Breast epithelium (tissue), 4 donors: ENCODE measurements at regions of chr3 and their contacts with region 1.

Region 1: GRCh38 chr3:112799946-112800345 is 46.7 kb downstream of the CD200R1L start:
- DNase-seq: no peak
- H3K4me3 ChIP-seq: no peak overlapping the region
- H3K27ac ChIP-seq: no peak overlapping the region
- H3K4me1 ChIP-seq: no peaks in the 10 kb centered on the region
- H3K27me3 ChIP-seq: no peaks in the 10 kb centered on the region
- CTCF ChIP-seq: no peak
- POLR2A ChIP-seq: no peak

Region 2: DNA sequence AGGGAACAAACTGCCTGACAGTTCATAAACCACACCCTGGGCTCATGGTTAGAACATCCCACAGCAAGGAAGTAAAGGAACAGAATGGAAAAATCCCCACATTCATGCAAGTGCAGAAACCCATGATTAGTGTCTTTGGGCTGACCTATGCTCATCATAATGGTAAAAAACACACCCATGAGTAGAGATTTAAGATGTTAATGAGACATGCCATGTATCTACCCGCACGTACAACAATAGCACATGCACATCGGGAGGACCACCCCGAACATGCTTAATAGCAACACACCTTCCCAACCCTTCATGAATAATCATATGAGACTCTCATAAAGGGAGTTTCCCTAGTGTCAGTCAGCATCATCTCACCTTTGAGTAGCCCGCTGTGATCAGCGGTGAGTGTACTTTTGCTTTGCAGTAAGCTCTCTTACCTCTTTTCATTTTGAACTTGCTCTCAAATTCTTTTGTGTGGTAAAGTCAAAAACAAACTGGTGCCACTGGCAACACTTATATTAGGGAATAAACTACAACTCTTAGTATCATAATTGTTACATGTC is 1228.0 kb before region 1 on chr3:
- intact Hi-C with region 1: loop called (anchors 5 kb)
- DNase-seq: no peak
- H3K4me3 ChIP-seq: no peak overlapping the region
- H3K27ac ChIP-seq: no peak overlapping the region
- H3K4me1 ChIP-seq: no peaks in the 10 kb centered on the region
- H3K27me3 ChIP-seq: no peaks in the 10 kb centered on the region
- CTCF ChIP-seq: no peak
- POLR2A ChIP-seq: no peak

Region 3: GRCh38 chr3:112734718-112735350 is 65.1 kb before region 1 on chr3:
- intact Hi-C with region 1: no loop called
- DNase-seq: no peak
- H3K4me3 ChIP-seq: no peak overlapping the region
- H3K27ac ChIP-seq: no peak overlapping the region
- H3K4me1 ChIP-seq: no peaks in the 10 kb centered on the region
- H3K27me3 ChIP-seq: no peaks in the 10 kb centered on the region
- CTCF ChIP-seq: peak in 1 of 3 donors; percentile 40
- POLR2A ChIP-seq: no peak

Region 4: GRCh38 chr3:113890256-113890900 is 1090.4 kb after region 1 on chr3:
- intact Hi-C with region 1: no loop called
- DNase-seq: no peak
- H3K4me3 ChIP-seq: no peak overlapping the region
- H3K27ac ChIP-seq: no peak overlapping the region
- H3K4me1 ChIP-seq: no peaks in the 10 kb centered on the region
- H3K27me3 ChIP-seq: no peaks in the 10 kb centered on the region
- CTCF ChIP-seq: no peak
- POLR2A ChIP-seq: no peak